T-cell (primary cell): ENCODE measurements at regions of chr14 and their contacts with region 1.

Region 1: DNA sequence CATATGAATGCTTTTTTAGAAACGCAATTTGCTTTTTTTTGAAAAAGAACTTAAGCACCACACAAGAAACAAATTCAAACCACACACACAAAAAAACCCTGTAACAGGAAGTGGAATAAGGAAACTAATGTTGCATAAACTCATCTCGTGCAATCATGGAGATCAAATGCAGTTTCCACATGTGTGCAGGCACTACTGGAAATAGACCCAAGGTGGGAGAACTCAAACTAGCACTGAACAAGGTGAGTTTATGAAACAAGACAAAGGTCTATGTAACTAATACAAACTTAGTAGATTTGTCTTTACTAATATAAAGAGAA is 17.5 kb downstream of the NIN start:
- DNase-seq: peak in 2 of 35 experiments; percentile 13 to 69
- ATAC-seq: peak; percentile 83 to 93 (median 87)
- H3K4me3 ChIP-seq: peak overlapping the region; percentile 6 to 19
- H3K4me3 Mint-ChIP-seq: peak overlapping the region; percentile 61 to 79 (median 77)
- H3K27ac ChIP-seq: peak overlapping the region; percentile 66
- H3K27ac Mint-ChIP-seq: peak overlapping the region; percentile 95 to 98
- H3K4me1 ChIP-seq: peaks cover 31 to 32% of the 10 kb centered on the region in 2 experiments
- H3K4me1 Mint-ChIP-seq: peaks cover 65% of the 10 kb centered on the region in 3 donors
- H3K27me3 ChIP-seq: no peaks in the 10 kb centered on the region
- H3K27me3 Mint-ChIP-seq: no peaks in the 10 kb centered on the region

Region 2: DNA sequence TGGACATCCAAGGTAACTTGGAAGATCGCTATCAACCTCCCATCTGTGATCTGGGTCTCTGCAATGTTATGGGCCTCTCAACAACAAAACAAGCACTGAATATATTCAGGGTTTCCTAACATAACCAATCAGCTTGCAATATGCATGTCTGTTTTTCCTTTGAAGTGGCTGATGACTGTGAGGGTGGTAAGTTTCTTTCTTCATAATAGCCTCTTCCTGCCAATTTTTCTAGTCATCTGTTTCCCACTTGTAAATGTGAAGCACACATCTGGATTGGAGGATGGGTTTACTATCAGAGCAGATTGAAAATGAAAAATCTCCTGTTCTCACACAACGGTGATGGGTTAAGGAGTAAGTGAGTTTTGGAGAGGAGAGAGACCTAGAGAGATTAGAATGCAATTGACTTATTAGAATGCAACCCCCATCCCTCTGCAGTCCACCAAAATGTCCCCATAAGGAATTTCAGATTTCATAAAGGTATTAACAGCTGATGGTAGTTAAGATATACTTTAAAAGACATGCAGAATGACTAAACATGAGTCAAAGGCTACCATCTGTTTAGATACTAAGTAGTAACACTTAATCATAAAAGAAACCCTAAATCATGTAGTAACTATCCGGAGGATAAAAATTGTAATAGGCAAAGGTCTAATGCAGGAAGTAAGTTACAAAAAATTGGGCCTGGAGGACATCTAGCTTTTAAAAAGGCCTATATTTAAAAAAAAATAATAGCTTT is 87.0 kb before region 1 on chr14:
- CTCF ChIA-PET with region 1: no interaction called
- POLR2A ChIA-PET with region 1: interaction called in 1 of 2 experiments, 19 read pairs
- DNase-seq: peak in 5 of 35 experiments; percentile 3 to 53 (median 9)
- ATAC-seq: peak; percentile 69 to 93 (median 89)
- H3K4me3 ChIP-seq: no peak overlapping the region
- H3K4me3 Mint-ChIP-seq: peak overlapping the region; percentile 1 to 10 (median 1)
- H3K27ac ChIP-seq: peak overlapping the region; percentile 62
- H3K27ac Mint-ChIP-seq: peak overlapping the region; percentile 85 to 87
- H3K4me1 ChIP-seq: peaks cover 0 to 2% of the 10 kb centered on the region in 2 experiments
- H3K4me1 Mint-ChIP-seq: peaks cover 25 to 34% (median 29%) of the 10 kb centered on the region in 3 donors
- H3K27me3 ChIP-seq: no peaks in the 10 kb centered on the region
- H3K27me3 Mint-ChIP-seq: no peaks in the 10 kb centered on the region